Gastrocnemius medialis (tissue), 4 donors: ENCODE measurements at regions of chr5 and their contacts with region 1.

Region 1: GRCh38 chr5:128201065-128201926 is 117.7 kb downstream of the SLC12A2 start:
- DNase-seq: peak; percentile 53 to 71
- ATAC-seq: peak; percentile 14 to 45
- H3K4me3 ChIP-seq: peak overlapping the region in 3 of 4 donors; percentile 24 to 50 (median 41)
- H3K27ac ChIP-seq: peak overlapping the region in 2 of 4 donors; percentile 87 to 88
- H3K4me1 ChIP-seq: peaks cover 34 to 39% of the 10 kb centered on the region in 2 donors
- H3K27me3 ChIP-seq: no peaks in the 10 kb centered on the region
- CTCF ChIP-seq: peak; percentile 75 to 93 (median 88)
- POLR2A ChIP-seq: no peak

Region 2: GRCh38 chr5:127564002-127564769 is 637.1 kb before region 1 on chr5:
- in situ Hi-C with region 1: loop called (anchors 5 kb)
- intact Hi-C with region 1: loop called (anchors 1 kb)
- DNase-seq: peak in 1 of 2 donors; percentile 16
- ATAC-seq: peak; percentile 79 to 87
- H3K4me3 ChIP-seq: no peak overlapping the region
- H3K27ac ChIP-seq: peak overlapping the region in 1 of 4 donors; percentile 27
- H3K4me1 ChIP-seq: peaks cover 12 to 25% of the 10 kb centered on the region in 2 donors
- H3K27me3 ChIP-seq: no peaks in the 10 kb centered on the region
- CTCF ChIP-seq: peak; percentile 58 to 84 (median 71)
- POLR2A ChIP-seq: no peak

Region 3: DNA sequence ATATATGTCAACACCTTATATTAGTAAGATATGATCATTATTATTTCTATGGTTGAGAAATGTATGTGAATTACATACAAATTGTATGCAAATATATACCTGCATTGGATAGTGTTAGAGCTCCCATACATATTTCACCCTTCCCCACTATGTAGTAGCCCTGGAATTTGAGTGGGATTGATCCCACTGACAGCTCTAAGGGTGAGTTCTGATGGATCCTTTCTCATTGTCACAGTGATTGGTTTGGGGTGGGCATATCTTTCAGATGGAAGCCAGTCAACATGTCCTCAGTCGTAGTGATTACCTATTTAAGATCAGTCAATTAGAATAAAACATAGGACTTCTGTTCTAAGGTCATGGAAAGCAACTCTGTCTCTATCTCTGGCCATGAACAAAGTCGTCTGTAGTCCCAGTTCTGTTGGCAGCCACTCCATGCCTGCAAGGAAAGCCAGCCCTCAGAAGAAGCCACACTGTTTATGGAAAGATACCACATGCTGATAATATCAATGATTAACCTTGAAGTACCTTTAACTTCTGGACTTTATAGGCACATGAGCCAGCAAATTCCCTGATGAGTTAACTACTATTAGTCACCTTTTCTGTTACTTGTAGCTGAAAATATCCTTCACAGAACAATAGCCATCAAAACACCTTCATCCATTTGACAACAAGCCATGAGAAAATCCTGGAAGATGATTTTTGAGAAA is 503.2 kb before region 1 on chr5:
- in situ Hi-C with region 1: no loop called
- intact Hi-C with region 1: loop called (anchors 10 kb)
- DNase-seq: no peak
- ATAC-seq: no peak
- H3K4me3 ChIP-seq: no peak overlapping the region
- H3K27ac ChIP-seq: peak overlapping the region in 3 of 4 donors; percentile 12 to 89 (median 87)
- H3K4me1 ChIP-seq: peaks cover 31 to 36% of the 10 kb centered on the region in 2 donors
- H3K27me3 ChIP-seq: no peaks in the 10 kb centered on the region
- CTCF ChIP-seq: no peak
- POLR2A ChIP-seq: no peak

Region 4: DNA sequence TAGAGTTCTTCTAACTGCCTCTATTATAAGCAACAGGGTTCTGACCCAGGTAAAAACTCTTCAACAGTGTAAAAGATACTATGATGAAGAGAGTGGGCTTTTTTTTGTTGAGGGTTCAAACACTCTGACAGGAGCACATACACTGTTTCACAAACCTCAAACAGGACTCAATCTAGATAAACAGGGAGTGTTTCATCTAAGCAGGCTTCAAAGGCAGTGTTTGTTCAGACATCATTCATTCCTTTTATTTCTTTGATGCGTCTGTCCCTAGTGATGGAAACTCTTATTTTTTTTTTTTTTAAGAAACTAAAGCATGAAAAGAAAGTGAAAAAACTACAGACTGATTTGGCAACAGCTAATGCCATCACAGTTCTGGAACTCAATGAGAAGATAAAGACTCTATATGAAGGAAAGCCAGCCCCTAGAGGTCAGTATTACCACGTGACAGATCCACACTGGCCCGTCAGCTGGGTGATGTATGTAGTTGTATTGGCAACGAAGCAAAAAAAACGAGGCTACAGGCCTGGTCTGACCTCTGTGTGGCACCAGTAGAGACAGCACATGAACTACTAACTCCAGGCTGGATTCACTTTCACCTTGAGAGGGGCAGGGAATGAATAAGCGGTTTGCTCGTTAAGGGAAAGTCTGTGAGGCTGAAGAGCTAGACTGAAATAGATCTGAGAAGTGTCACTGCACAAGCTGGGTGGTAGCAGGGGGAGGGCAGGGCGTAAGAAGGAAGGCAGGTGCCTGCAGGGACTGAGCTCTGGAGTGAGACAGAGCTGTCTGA is 325.9 kb before region 1 on chr5:
- in situ Hi-C with region 1: no loop called
- intact Hi-C with region 1: loop called (anchors 5 kb)
- DNase-seq: peak; percentile 36 to 79
- ATAC-seq: peak; percentile 90 to 93
- H3K4me3 ChIP-seq: peak overlapping the region in 2 of 4 donors; percentile 6 to 11
- H3K27ac ChIP-seq: peak overlapping the region; percentile 75 to 80 (median 78)
- H3K4me1 ChIP-seq: peaks cover 39 to 41% of the 10 kb centered on the region in 2 donors
- H3K27me3 ChIP-seq: no peaks in the 10 kb centered on the region
- CTCF ChIP-seq: peak in 2 of 5 experiments; percentile 21 to 27
- POLR2A ChIP-seq: no peak

Region 5: DNA sequence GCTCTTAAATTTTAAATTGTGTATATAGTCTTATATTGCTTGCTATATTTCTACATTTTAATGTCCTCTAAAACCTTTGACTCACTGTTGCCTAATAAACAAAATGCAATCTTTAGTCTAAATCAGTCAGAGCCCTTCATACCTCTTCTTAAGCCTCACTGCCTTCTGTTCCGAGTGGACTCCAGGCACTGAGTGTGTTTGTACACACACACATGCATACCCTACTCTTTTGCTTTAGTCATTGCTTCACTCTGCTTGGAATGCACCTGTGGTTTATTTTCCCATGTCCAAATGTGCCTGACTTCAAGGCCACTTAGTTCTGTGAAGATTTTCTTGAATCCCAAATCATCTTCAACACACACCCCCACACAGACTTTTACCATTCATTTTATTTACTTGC is 56.8 kb before region 1 on chr5:
- in situ Hi-C with region 1: no loop called
- intact Hi-C with region 1: loop called (anchors 5 kb)
- DNase-seq: no peak
- ATAC-seq: no peak
- H3K4me3 ChIP-seq: no peak overlapping the region
- H3K27ac ChIP-seq: peak overlapping the region in 2 of 4 donors; percentile 25 to 29
- H3K4me1 ChIP-seq: peaks cover 4% of the 10 kb centered on the region in 2 donors
- H3K27me3 ChIP-seq: no peaks in the 10 kb centered on the region
- CTCF ChIP-seq: no peak
- POLR2A ChIP-seq: no peak

Region 6: GRCh38 chr5:129767906-129768380 is 1566.6 kb after region 1 on chr5:
- in situ Hi-C with region 1: loop called in 1 of 4 experiments (anchors 25 kb)
- intact Hi-C with region 1: no loop called
- DNase-seq: peak; percentile 28 to 41
- ATAC-seq: peak; percentile 93 to 95
- H3K4me3 ChIP-seq: no peak overlapping the region
- H3K27ac ChIP-seq: no peak overlapping the region
- H3K4me1 ChIP-seq: no peaks in the 10 kb centered on the region
- H3K27me3 ChIP-seq: no peaks in the 10 kb centered on the region
- CTCF ChIP-seq: peak; percentile 73 to 95 (median 81)
- POLR2A ChIP-seq: no peak